Right cardiac atrium (tissue), 5 donors: ENCODE measurements at regions of chr20 and their contacts with region 1.

Region 1: DNA sequence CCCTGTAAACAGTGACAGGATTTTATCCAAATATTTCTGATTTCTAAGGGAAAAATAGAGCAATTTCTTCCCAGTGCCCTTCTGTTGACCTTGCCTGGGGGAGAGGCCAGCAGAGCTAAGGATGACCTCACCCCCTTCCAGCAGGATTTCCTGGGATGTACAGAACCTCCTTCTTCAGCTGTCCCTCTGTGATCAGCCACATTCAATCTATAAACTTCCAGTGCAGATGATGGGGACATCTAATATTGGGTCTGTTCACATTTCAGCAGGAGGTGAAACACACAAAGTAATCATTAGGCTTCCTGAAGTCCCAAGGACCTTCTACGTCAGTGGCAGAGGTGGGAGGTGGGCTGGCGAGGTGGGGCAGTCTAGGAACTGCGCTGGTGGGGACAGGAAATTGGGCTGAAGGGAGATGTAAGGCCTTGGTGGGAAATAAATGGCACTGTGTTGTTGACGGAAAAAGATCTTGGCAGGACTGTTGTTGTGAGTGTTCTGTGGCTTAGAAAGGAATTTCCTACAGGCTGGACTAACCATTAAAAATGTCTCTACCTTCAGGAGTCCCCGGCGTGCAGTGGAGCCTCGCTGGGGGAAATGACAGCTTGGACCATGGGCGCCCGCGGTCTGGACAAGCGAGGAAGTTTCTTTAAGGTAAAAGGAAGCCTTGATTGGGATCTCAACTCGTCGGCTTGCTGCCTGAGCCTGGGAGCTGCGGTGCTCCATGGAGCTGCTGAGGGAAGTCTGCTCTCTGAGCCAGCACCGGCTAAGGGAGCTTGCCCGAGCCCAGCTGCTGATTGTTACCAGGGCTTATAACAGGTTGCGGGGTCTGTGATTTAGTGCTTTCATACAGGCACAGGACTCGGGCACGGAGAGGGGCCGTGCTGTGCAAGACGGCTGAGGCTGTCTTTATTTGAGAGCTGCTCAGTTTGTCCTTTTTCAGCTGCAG is 127.9 kb upstream of the NAA20 start:
- DNase-seq: peak; percentile 72 to 82 (median 82)
- ATAC-seq: peak; percentile 84 to 87
- H3K4me3 ChIP-seq: peak overlapping the region; percentile 44
- H3K27ac ChIP-seq: peak overlapping the region; percentile 96
- H3K4me1 ChIP-seq: peaks cover 23% of the 10 kb centered on the region
- H3K27me3 ChIP-seq: no peaks in the 10 kb centered on the region

Region 2: GRCh38 chr20:19784511-19785172 is 104.6 kb before region 1 on chr20:
- intact Hi-C with region 1: loop called in 2 of 4 experiments (anchors 10 kb)
- DNase-seq: peak; percentile 44 to 75 (median 64)
- ATAC-seq: peak; percentile 76 to 81
- H3K4me3 ChIP-seq: no peak overlapping the region
- H3K27ac ChIP-seq: peak overlapping the region; percentile 91
- H3K4me1 ChIP-seq: peaks cover 16% of the 10 kb centered on the region
- H3K27me3 ChIP-seq: no peaks in the 10 kb centered on the region

Region 3: GRCh38 chr20:19815553-19815991 is 73.7 kb before region 1 on chr20:
- intact Hi-C with region 1: loop called in 1 of 4 experiments (anchors 5 kb)
- DNase-seq: no peak
- ATAC-seq: peak; percentile 82 to 95
- H3K4me3 ChIP-seq: no peak overlapping the region
- H3K27ac ChIP-seq: no peak overlapping the region
- H3K4me1 ChIP-seq: no peaks in the 10 kb centered on the region
- H3K27me3 ChIP-seq: no peaks in the 10 kb centered on the region

Region 4: DNA sequence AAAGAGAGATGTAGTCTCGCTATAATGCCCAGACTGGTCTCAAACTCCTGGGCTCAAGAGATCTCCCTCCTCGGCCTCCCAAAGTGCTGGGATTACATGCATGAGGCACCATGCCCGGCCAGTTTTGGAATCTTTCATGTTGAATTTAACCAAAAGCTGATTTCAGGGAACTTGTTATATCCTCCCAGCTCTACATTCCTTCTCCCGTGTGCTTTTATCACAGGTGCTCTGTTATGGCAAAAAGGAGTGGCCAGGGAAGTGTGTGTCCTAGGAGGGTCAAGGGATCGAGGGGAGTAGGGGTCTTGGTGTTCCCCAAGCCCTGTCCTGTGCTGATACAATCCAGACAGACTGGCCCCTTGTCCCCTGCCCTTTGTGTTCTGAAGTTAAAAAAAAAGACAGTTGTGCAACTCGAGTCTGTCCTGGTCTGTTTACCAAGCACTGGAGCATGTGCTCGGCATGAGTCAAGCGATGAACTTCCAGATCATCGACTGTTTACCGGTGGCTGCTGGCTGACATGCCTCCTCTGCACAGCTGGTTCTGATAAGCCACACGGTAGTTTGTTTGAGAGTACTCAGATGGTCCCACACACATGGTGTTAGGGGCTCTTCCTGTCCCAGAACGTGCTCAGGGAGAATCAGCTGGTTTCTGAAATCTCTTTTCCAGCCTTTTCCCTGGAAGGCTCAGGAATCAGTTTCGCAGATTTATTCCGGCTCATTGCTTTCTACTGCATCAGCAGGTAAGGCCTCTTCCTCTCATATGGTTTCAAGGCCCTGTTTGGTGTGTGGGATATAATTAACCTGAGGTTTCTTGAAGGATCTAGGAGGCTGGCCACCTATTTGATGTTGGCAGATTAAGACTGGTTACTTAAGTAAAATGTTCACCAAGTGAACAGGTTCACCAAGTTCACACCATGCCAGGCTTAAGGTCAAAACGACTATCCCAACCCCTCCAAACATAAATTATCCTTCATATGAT is 75.3 kb after region 1 on chr20:
- intact Hi-C with region 1: no loop called
- DNase-seq: peak in 2 of 3 donors; percentile 34 to 62
- ATAC-seq: peak; percentile 69 to 72
- H3K4me3 ChIP-seq: no peak overlapping the region
- H3K27ac ChIP-seq: peak overlapping the region; percentile 55
- H3K4me1 ChIP-seq: peaks cover 4% of the 10 kb centered on the region
- H3K27me3 ChIP-seq: no peaks in the 10 kb centered on the region

Region 5: GRCh38 chr20:19974626-19975435 is 85.5 kb after region 1 on chr20:
- intact Hi-C with region 1: loop called in 1 of 4 experiments (anchors 5 kb)
- DNase-seq: peak; percentile 85 to 93 (median 92)
- ATAC-seq: peak; percentile 88 to 90
- H3K4me3 ChIP-seq: peak overlapping the region; percentile 40
- H3K27ac ChIP-seq: peak overlapping the region; percentile 95
- H3K4me1 ChIP-seq: peaks cover 12% of the 10 kb centered on the region
- H3K27me3 ChIP-seq: no peaks in the 10 kb centered on the region